Activated CD4-positive, alpha-beta memory T cell treated with anti-CD3 and anti-CD28 coated beads, Interleukin-2, amount 10 ng/mL, durations not matched to agents 7 days and 5 days (primary cell): ENCODE measurements at regions of chr6 and their contacts with region 1.

Region 1: GRCh38 chr6:42547407-42548329 is 16.2 kb upstream of the UBR2 start:
- DNase-seq: peak; percentile 88
- H3K4me3 Mint-ChIP-seq: peak overlapping the region; percentile 54
- H3K27ac Mint-ChIP-seq: peak overlapping the region; percentile 33
- H3K4me1 Mint-ChIP-seq: peaks cover 20% of the 10 kb centered on the region
- H3K27me3 Mint-ChIP-seq: peaks cover 4% of the 10 kb centered on the region

Region 2: GRCh38 chr6:42212442-42212841 is 335.2 kb before region 1 on chr6:
- CTCF ChIA-PET with region 1: interaction called, 59 read pairs
- POLR2A ChIA-PET with region 1: interaction called, 8 read pairs
- DNase-seq: no peak
- H3K4me3 Mint-ChIP-seq: no peak overlapping the region
- H3K27ac Mint-ChIP-seq: no peak overlapping the region
- H3K4me1 Mint-ChIP-seq: peaks cover 25% of the 10 kb centered on the region
- H3K27me3 Mint-ChIP-seq: no peaks in the 10 kb centered on the region

Region 3: GRCh38 chr6:42269553-42269952 is 278.1 kb before region 1 on chr6:
- CTCF ChIA-PET with region 1: interaction called, 78 read pairs
- POLR2A ChIA-PET with region 1: interaction called, 3 read pairs
- DNase-seq: peak; percentile 33
- H3K4me3 Mint-ChIP-seq: no peak overlapping the region
- H3K27ac Mint-ChIP-seq: peak overlapping the region; percentile 8
- H3K4me1 Mint-ChIP-seq: peaks cover 12% of the 10 kb centered on the region
- H3K27me3 Mint-ChIP-seq: no peaks in the 10 kb centered on the region

Region 4: GRCh38 chr6:42367353-42368011 is 180.2 kb before region 1 on chr6:
- CTCF ChIA-PET with region 1: interaction called, 12 read pairs
- POLR2A ChIA-PET with region 1: interaction called, 3 read pairs
- DNase-seq: peak; percentile 48
- H3K4me3 Mint-ChIP-seq: peak overlapping the region; percentile 66
- H3K27ac Mint-ChIP-seq: peak overlapping the region; percentile 96
- H3K4me1 Mint-ChIP-seq: peaks cover 74% of the 10 kb centered on the region
- H3K27me3 Mint-ChIP-seq: no peaks in the 10 kb centered on the region

Region 5: GRCh38 chr6:42428326-42429041 is 119.2 kb before region 1 on chr6:
- CTCF ChIA-PET with region 1: interaction called, 14 read pairs
- POLR2A ChIA-PET with region 1: no interaction called
- DNase-seq: peak; percentile 49
- H3K4me3 Mint-ChIP-seq: peak overlapping the region; percentile 0
- H3K27ac Mint-ChIP-seq: peak overlapping the region; percentile 47
- H3K4me1 Mint-ChIP-seq: peaks cover 51% of the 10 kb centered on the region
- H3K27me3 Mint-ChIP-seq: no peaks in the 10 kb centered on the region

Region 6: GRCh38 chr6:42520786-42521607 is 26.7 kb before region 1 on chr6:
- CTCF ChIA-PET with region 1: interaction called, 15 read pairs
- POLR2A ChIA-PET with region 1: no interaction called
- DNase-seq: no peak
- H3K4me3 Mint-ChIP-seq: no peak overlapping the region
- H3K27ac Mint-ChIP-seq: peak overlapping the region; percentile 31
- H3K4me1 Mint-ChIP-seq: peaks cover 13% of the 10 kb centered on the region
- H3K27me3 Mint-ChIP-seq: no peaks in the 10 kb centered on the region

Region 7: GRCh38 chr6:42726485-42727086 is 178.9 kb after region 1 on chr6:
- CTCF ChIA-PET with region 1: interaction called, 10 read pairs
- POLR2A ChIA-PET with region 1: no interaction called
- DNase-seq: peak; percentile 79
- H3K4me3 Mint-ChIP-seq: peak overlapping the region; percentile 77
- H3K27ac Mint-ChIP-seq: peak overlapping the region; percentile 91
- H3K4me1 Mint-ChIP-seq: peaks cover 22% of the 10 kb centered on the region
- H3K27me3 Mint-ChIP-seq: no peaks in the 10 kb centered on the region

Region 8: GRCh38 chr6:42831237-42831636 is 283.6 kb after region 1 on chr6:
- CTCF ChIA-PET with region 1: no interaction called
- POLR2A ChIA-PET with region 1: no interaction called
- DNase-seq: no peak
- H3K4me3 Mint-ChIP-seq: no peak overlapping the region
- H3K27ac Mint-ChIP-seq: no peak overlapping the region
- H3K4me1 Mint-ChIP-seq: no peaks in the 10 kb centered on the region
- H3K27me3 Mint-ChIP-seq: no peaks in the 10 kb centered on the region